PC-9 (cell line): ENCODE measurements at regions of chr1 and their contacts with region 1.

Region 1: GRCh38 chr1:200620273-200621131 is at the start of gene KIF14:
- DNase-seq: peak; percentile 81 to 91
- H3K4me3 ChIP-seq: peak within 1 kb of the TSS; percentile 69
- H3K27ac ChIP-seq: peak within 1 kb of the TSS; percentile 53
- H3K4me1 ChIP-seq: peaks cover 17% of the 10 kb centered on the region
- H3K27me3 ChIP-seq: no peaks in the 10 kb centered on the region
- CTCF ChIP-seq: no peak
- total RNA-seq, gene KIF14: 22.8 and 30.0 TPM in 2 replicates

Region 2: GRCh38 chr1:200639790-200640669 is 19.5 kb after region 1 on chr1:
- CTCF ChIA-PET with region 1: interaction called, 6 read pairs
- POLR2A ChIA-PET with region 1: interaction called, 15 read pairs
- intact Hi-C with region 1: loop called (anchors 1 kb)
- DNase-seq: peak; percentile 71 to 88
- H3K4me3 ChIP-seq: peak overlapping the region; percentile 10; the same call in 1 of the 2 replicates
- H3K27ac ChIP-seq: peak overlapping the region; percentile 86
- H3K4me1 ChIP-seq: peaks cover 45% of the 10 kb centered on the region
- H3K27me3 ChIP-seq: no peaks in the 10 kb centered on the region
- CTCF ChIP-seq: no peak

Region 3: DNA sequence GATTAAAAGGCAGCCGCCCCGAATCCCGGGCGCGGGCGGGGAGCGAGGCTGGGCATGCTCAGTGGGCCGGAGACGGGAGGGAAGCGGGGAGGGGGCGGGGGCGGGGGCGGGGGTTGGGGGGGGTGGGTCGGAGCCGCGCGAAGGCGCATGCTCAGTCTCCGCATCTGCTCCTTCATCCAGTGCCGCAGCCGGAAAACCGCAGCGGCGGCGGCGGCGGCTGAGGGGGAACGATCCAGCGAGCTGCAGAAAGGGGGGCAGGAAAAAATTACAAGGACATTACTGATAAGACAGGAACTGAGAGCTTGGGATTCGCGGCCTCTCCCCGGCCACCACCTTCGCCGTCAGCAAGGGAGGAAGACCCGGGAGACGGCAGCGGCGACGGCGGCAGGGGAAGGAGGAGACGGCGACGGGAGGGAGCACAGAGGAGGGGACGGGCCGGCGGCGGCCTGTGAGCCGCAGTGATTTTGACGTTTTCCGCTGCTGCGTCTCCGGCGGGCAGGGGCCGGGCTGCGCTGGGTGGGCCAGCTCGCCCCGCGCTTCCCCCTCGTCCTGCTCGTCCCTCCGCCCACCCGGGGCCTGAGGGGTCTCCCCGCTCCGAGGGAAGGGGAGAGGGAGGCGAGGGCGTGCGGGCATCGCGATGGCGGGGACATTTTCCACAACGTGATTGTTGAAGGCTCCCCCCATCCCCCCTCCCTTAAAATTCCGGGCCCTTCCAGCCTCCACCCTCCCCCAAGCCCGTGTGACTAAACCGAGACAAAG is 118.4 kb after region 1 on chr1 and contains the start of gene CAMSAP2:
- CTCF ChIA-PET with region 1: interaction called, 4 read pairs
- POLR2A ChIA-PET with region 1: no interaction called
- intact Hi-C with region 1: loop called (anchors 2 kb)
- DNase-seq: peak; percentile 70 to 88
- H3K4me3 ChIP-seq: peak within 1 kb of the TSS; percentile 99
- H3K27ac ChIP-seq: peak within 1 kb of the TSS; percentile 91
- H3K4me1 ChIP-seq: peaks cover 40% of the 10 kb centered on the region
- H3K27me3 ChIP-seq: no peaks in the 10 kb centered on the region
- CTCF ChIP-seq: no peak
- total RNA-seq, gene CAMSAP2: 27.5 and 40.3 TPM in 2 replicates

Region 4: DNA sequence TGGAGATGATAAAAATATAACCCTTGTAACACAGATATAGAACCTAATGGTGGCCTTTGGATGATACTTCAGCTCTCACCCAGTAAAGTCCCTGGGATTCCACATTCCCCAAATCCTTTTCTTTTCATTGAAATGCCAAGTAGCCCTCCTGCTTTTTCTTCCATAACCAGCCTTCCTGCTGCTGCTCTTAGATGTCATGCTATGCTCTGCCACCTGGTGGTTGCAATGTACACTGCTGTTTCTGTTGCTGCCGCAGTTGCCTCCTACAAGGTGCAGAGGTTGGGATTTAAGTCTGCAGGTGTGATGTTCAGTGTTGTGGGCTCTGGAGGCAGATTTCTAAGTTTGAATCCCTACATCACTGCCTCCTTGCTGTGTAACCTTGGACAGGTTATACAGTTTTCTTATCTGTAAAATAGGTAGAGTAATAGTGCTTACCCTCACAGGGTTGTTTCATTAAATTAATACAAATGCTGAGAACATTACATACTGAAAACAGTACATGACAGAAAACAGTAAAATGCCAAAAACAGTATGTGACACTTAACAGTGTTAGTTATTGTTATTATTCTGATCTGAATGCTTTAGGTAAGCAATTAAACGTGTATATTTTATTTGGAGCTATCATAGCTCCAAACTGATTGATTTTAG is 182.5 kb after region 1 on chr1:
- CTCF ChIA-PET with region 1: interaction called, 5 read pairs
- POLR2A ChIA-PET with region 1: no interaction called
- intact Hi-C with region 1: loop called (anchors 1 kb)
- DNase-seq: peak; percentile 57 to 74
- H3K4me3 ChIP-seq: no peak overlapping the region
- H3K27ac ChIP-seq: no peak overlapping the region
- H3K4me1 ChIP-seq: no peaks in the 10 kb centered on the region
- H3K27me3 ChIP-seq: no peaks in the 10 kb centered on the region
- CTCF ChIP-seq: peak; percentile 93

Region 5: DNA sequence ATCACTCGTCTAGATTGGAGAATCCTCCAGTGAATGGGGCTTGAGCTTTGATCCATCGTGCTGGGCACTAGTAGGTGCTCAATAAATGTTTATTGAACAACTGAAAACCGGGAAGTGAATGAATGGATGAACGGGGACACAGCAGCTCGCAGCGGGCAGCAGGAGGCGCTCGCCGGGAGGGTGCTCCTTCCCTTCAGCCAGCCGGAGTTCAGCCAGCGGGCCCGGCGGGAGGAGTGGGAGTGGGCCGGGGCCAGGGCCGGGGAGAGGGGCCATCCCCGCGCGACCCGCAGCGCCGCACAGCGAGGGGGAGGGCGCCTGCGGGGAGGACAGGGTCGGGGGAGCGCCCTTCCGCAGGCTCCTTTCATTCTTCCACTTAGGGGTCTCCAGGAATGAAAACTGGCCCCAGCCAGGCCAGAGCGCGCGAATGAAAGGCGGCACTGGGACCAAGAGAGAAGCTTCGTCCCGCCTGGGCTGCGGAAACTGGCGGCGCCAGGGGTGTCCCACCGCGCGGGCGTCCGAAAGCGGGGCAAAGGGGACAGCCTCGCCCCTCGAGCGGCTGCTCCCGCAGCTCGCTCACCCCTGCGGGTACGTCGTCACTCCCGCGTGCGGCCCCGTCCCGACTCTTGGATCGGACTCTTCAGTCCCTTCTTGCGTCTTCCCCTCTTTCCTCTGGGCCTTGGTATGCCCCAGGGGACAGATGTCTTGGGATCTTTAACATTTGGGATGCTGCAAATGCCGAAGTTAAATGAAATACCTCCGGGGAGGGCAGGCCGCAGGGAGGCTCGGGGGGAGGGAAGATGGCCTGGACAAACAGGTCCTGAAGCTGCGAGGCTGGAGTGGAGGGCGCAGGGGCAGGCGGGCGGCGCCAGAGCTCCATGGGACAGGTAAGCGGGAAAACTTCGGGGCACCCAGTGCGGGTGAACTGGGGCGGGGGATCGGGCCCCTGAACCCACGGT is 270.6 kb after region 1 on chr1:
- CTCF ChIA-PET with region 1: no interaction called
- POLR2A ChIA-PET with region 1: no interaction called
- intact Hi-C with region 1: loop called (anchors 2 kb)
- DNase-seq: peak; percentile 61 to 63
- H3K4me3 ChIP-seq: peak overlapping the region; percentile 66
- H3K27ac ChIP-seq: peak overlapping the region; percentile 76
- H3K4me1 ChIP-seq: peaks cover 66% of the 10 kb centered on the region
- H3K27me3 ChIP-seq: no peaks in the 10 kb centered on the region
- CTCF ChIP-seq: peak; percentile 66; the same call in 1 of the 2 replicates

Region 6: DNA sequence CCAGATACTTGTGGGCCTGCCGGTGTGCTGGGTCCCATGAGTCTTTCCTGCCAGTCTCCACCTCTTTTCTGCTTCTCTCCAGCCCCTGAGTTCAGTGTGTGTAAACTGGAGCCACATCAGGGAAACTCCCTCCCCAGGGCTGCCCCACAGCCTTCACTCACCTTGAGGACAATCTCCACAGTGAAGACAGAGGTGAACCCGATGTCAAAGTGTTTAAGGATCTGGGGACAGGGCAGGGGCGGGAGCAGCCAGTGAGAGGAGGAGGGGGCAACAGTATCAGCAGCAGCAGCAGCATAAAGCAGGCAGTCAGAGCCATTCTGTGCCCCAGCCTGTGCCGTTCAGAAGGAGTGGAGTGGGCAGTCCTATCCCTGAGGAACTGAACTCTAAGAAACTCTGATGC is 448.5 kb after region 1 on chr1:
- CTCF ChIA-PET with region 1: no interaction called
- POLR2A ChIA-PET with region 1: interaction called, 19 read pairs
- intact Hi-C with region 1: no loop called
- DNase-seq: no peak
- H3K4me3 ChIP-seq: no peak overlapping the region
- H3K27ac ChIP-seq: no peak overlapping the region
- H3K4me1 ChIP-seq: no peaks in the 10 kb centered on the region
- H3K27me3 ChIP-seq: peaks cover 70% of the 10 kb centered on the region
- CTCF ChIP-seq: no peak